Activated CD8-positive, alpha-beta memory T cell treated with anti-CD3 and anti-CD28 coated beads, Interleukin-2, amount 10 ng/mL, durations not matched to agents 7 days and 5 days (primary cell): ENCODE measurements at regions of chr18 and their contacts with region 1.

Region 1: DNA sequence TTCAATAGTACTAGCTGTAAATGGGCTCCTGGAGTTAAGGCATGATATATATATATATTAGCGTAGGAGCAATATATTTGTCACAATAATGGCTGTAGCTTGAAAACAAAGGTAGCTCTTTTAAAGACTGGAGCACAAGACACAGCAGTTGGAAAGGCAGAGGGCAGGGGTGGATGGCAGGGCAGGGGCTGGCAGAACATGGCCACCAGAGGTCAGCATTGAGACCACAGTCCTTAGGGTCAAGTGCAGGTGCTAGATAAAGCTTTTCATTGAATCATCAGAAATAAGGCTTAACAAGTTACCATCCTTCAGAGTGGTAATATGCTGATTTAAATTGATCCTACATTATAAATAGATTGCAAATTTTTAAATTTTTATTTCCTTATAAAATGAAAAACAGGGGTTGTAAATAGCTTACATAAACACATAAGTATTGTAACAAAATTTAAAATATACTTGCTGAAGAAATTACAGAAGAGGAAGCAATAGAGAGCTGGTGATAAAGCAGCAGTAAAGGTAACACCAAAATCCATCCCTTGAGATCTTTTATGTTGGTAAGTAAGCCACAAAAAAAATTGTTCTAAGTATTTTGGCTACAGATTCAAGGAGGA is 161.2 kb upstream of the PIEZO2 start:
- DNase-seq: peak; percentile 50
- ATAC-seq: peak; percentile 36
- H3K4me3 Mint-ChIP-seq: no peak overlapping the region
- H3K27ac Mint-ChIP-seq: no peak overlapping the region
- H3K4me1 Mint-ChIP-seq: no peaks in the 10 kb centered on the region
- H3K27me3 Mint-ChIP-seq: no peaks in the 10 kb centered on the region

Region 2: GRCh38 chr18:11096411-11096810 is 214.2 kb before region 1 on chr18:
- CTCF ChIA-PET with region 1: no interaction called
- DNase-seq: no peak
- ATAC-seq: no peak
- H3K4me3 Mint-ChIP-seq: no peak overlapping the region
- H3K27ac Mint-ChIP-seq: no peak overlapping the region
- H3K4me1 Mint-ChIP-seq: no peaks in the 10 kb centered on the region
- H3K27me3 Mint-ChIP-seq: no peaks in the 10 kb centered on the region

Region 3: GRCh38 chr18:11553098-11553940 is 242.7 kb after region 1 on chr18:
- CTCF ChIA-PET with region 1: interaction called, 11 read pairs
- DNase-seq: no peak
- ATAC-seq: peak; percentile 45
- H3K4me3 Mint-ChIP-seq: no peak overlapping the region
- H3K27ac Mint-ChIP-seq: no peak overlapping the region
- H3K4me1 Mint-ChIP-seq: peaks cover 5% of the 10 kb centered on the region
- H3K27me3 Mint-ChIP-seq: peaks cover 15% of the 10 kb centered on the region